Right ventricle myocardium inferior (tissue), 1 donor: ENCODE measurements at regions of chr9 and their contacts with region 1.

Region 1: DNA sequence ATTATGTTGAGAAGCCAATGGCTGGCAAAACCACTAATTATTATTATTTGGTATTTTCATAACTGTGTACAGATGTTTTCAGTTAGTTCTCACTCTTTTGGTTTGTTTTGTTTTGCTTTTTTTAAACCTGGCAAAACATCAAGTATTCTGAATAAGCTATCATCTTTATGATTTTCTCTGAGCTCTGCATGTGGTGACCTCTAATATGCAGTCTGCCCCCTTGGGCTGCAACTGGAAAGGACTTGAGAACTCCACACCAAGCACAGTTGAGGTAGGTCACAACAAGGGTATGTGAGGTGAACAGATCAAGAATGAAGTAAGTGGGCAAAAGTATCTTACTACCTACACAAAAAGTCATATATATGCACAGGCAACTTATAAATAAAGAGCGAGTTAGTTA is 202.2 kb downstream of the NFIB start:
- DNase-seq: no peak
- ATAC-seq: no peak

Region 2: DNA sequence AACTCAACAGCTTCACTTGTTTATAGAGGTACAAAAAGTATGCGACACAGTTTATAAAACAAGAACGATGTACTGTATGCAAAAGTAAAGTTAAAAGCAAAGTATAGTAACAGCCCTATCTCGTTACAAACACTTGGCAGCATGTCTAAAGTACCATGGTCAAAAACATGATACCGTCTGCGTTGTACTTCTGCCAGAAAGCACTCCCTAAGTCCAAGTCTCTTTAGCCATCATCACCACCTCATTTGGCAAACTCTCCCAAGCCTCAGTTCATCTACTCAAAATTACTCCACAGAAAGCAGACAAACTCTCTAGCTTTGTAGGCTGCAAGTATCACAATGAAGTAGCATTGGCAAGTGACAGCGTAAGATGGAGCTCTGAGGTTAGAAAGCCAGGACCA is 128.8 kb after region 1 on chr9:
- intact Hi-C with region 1: loop called (anchors 5 kb)
- DNase-seq: no peak
- ATAC-seq: peak; percentile 57